ENCODE measurements at regions of chr19 and their contacts with region 1.

Region 1: DNA sequence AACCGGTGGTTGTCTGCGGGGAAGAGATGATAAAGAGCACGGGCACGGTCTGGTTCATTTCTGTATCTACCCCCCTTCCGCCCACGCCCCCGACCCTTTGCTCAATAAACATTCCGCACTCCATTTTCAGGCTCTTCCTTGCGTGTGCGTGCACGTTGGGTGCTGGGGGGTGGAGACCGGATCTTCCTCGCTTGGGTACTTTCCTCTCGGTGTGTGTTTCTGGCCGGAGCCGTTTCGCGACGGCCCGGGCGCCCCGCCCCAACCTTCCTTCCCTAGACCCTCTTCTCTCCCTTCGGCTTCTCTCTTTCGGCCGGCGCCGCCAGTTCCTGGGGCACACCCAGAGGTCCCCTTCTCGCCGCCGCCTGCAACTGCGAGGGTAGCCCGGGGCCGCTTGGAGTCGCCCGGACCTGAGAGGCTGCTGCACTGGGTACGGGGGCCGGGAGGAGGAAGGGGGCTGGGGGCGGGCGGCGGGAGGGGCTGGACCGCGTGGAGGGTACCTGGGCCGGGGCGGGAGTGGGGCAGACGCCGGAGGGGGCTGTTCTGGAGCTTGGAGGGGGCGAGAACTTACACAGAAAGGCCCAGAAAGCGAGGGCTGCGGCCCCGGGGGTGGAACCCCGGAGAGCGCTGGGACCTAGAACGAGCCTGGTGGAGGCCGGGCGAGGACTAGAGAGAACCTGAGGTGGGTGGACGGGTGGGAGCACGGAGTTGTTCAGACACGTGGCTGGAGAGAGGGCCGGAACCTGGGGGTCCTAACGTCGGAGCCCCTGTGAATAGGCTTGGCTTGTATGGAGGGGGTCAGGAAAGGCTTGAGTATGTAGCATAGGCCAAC is at the start of gene ZNF581:
- DNase-seq: peak; percentile 90
- ATAC-seq: peak; percentile 36
- H3K4me3 ChIP-seq: peak within 1 kb of the TSS; percentile 59 to 85 (median 78)
- H3K4me3 Mint-ChIP-seq: peak within 1 kb of the TSS; percentile 88
- H3K27ac ChIP-seq: peak within 1 kb of the TSS; percentile 79 to 82
- H3K27ac Mint-ChIP-seq: peak within 1 kb of the TSS; percentile 98
- H3K4me1 ChIP-seq: peaks cover 32 to 68% of the 10 kb centered on the region in 2 donors
- H3K4me1 Mint-ChIP-seq: peaks cover 60% of the 10 kb centered on the region
- H3K27me3 ChIP-seq: no peaks in the 10 kb centered on the region
- H3K27me3 Mint-ChIP-seq: no peaks in the 10 kb centered on the region
- CTCF ChIP-seq: no peak
- total RNA-seq, gene ZNF581: 47.3 and 51.3 TPM in 2 replicates

Region 2: DNA sequence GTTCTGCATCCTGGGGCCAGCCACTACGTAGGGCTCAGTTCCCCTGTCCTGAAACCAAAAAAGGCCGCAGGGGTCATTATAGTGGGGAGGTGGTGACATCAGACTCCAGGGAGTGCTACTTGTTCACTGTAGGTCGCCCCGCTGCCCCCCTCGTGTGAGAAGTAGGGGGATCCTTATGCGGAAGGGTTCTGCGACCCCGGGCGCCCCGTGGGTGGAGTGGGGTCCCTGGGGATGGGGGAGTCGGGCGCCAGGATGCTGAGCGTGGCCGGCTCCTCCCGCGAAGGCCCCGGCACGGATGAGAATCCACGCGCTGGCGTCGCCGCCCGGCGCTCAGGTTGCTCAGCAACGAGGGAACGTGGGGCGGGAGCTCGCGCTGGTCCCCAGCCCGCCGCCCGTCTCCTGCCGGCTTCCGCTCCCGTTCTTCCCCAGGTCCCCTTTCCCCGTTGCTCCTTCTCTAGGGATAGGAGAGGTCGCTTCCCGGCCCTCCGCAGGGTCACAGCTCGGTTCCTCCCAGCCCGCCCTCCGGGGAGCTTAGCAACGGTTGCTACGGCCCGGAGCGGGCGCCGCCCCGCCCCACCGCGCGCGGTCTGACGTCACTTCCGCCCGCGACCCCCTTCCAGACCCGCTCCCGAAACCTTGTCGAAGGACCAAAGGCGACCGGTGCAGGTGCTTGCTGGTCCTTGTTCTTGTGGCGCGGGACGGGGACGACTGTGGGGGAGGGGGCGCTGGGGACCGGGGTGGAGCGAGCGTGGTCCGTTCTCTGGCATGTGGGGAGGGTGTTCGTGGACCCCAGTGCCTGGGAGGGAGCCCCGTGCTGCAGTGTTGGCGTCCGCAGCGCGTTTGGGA is 158.7 kb before region 1 on chr19 and contains the start of gene NAT14:
- CTCF ChIA-PET with region 1: no interaction called
- POLR2A ChIA-PET with region 1: no interaction called
- intact Hi-C with region 1: no loop called
- DNase-seq: peak; percentile 89
- ATAC-seq: peak; percentile 76
- H3K4me3 ChIP-seq: peak within 1 kb of the TSS; percentile 3 to 71 (median 55)
- H3K4me3 Mint-ChIP-seq: peak within 1 kb of the TSS; percentile 83
- H3K27ac ChIP-seq: peak within 1 kb of the TSS; percentile 20 to 70
- H3K27ac Mint-ChIP-seq: peak within 1 kb of the TSS; percentile 80
- H3K4me1 ChIP-seq: peaks cover 10 to 22% of the 10 kb centered on the region in 2 donors
- H3K4me1 Mint-ChIP-seq: peaks cover 15% of the 10 kb centered on the region
- H3K27me3 ChIP-seq: no peaks in the 10 kb centered on the region
- H3K27me3 Mint-ChIP-seq: no peaks in the 10 kb centered on the region
- CTCF ChIP-seq: no peak
- total RNA-seq, gene NAT14: 10.7 and 12.6 TPM in 2 replicates

Region 3: GRCh38 chr19:55653758-55654539 is 10.4 kb after region 1 on chr19:
- CTCF ChIA-PET with region 1: interaction called, 131 read pairs
- POLR2A ChIA-PET with region 1: interaction called, 17 read pairs
- intact Hi-C with region 1: loop called (anchors 1 kb)
- DNase-seq: peak; percentile 100
- ATAC-seq: peak; percentile 77
- H3K4me3 ChIP-seq: peak overlapping the region; percentile 66 to 98 (median 92)
- H3K4me3 Mint-ChIP-seq: peak overlapping the region; percentile 93
- H3K27ac ChIP-seq: peak overlapping the region; percentile 98 to 100
- H3K27ac Mint-ChIP-seq: peak overlapping the region; percentile 96
- H3K4me1 ChIP-seq: peaks cover 41 to 53% of the 10 kb centered on the region in 2 donors
- H3K4me1 Mint-ChIP-seq: peaks cover 56% of the 10 kb centered on the region
- H3K27me3 ChIP-seq: no peaks in the 10 kb centered on the region
- H3K27me3 Mint-ChIP-seq: no peaks in the 10 kb centered on the region
- CTCF ChIP-seq: peak; percentile 100

Measured in B cell (primary cell).